GM10248 (cell line): ENCODE measurements at regions of chr17 and their contacts with region 1.

Region 1: DNA sequence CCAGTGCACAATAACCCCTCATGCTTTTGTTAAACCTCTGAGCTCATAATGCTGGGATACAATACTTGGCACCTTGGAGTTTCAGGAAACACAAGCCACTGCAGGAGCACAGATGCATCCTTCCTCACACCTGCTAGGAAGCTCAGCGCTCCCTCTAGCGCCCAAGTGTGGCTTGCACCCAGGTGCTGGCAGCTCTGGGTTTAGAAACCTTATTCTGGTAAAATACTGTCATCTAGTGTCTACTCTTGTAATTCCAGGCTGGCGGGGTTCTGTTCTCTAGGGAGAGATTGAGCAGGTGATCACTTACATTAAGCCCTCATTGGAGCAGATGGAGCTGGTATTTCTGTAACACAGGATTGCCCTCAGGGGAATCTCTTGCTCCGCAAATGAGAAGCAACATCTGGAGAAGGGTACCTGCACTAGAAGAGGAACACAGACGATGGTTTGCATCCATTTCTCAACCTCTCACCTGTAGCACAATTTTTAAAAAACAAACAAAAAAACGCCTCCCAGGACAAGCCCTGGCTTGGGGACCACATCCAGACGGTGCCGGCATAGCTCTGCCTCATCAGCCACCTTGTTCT is 1.5 kb downstream of the CCL1 start:
- DNase-seq: peak; percentile 84
- CTCF ChIP-seq: peak; percentile 97

Region 2: DNA sequence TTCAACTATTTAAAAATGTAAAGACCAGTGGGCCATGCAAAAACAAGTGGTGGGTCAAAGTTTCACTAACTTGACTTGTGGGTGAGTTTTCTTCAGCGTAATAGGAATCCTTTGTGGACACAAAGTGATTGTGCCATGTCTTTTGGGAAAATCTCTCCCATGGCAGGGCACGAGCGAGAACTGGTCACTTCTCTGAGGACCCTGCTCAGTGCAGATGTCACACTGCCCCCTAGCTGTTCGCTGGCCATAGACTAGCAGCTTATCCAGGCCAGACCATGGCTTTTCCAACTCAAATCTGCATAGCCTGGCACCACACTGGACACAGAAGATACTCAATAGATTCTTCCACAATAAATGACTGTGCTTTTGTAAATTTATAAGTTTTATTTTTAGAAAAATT is 412.5 kb before region 1 on chr17:
- CTCF ChIA-PET with region 1: no interaction called
- POLR2A ChIA-PET with region 1: no interaction called
- DNase-seq: no peak
- CTCF ChIP-seq: no peak

Region 3: DNA sequence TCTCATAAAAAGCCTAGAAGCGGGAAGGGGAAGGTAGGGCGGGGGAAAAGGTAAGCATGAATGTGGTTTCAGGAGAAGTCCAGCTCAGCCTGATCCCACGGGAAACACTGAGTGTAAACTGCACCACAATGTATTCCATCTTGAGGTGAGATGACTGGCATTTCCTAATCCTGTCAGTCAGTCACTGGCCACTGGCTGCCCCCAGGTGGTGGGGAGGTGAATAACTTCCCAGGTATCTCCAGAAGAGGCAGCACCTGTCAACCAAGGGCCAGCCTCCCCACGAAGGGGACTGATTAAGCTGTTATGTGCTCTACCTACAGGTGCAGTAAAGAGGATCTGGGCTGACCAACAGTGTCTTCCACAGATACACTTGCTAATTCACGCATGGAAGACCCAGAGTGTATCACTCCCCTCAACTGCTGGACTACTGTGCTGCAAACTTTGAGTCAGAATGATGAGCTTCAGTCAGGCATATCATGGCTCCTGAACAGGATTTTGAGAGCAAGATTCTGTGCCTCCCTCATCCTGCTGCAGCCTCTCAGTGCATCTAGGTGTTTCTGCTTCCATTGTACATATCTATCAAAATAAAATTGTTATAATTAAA is 215.0 kb before region 1 on chr17:
- CTCF ChIA-PET with region 1: interaction called, 10 read pairs
- POLR2A ChIA-PET with region 1: no interaction called
- DNase-seq: peak; percentile 61
- CTCF ChIP-seq: peak; percentile 66

Region 4: DNA sequence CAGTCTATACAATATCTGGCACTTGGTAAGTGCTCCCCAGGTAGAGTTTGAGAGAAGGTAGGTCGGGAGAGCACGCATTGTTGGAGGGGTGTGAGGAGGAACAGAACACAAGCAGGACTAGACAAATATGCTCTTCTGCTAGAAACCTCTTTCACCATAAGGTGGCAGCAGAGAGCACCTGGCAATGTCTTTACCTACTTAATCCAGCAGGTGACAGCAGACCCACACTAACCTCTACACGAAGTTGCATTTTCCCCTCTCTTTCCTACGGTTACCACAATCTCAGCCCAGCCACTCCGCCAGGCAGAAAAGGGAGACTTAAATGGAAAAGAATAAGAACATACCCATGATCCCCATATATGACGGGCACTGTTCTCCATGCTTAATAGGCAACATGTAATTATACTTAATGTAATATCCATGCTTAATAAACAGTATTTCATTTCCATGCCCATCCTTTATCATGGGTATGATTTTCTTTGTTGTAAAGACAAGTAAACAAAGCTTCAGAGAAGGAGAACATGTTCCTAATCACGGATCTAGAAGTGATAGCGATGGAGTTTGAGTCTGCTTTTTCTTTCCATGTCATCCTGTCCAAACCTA is 161.5 kb before region 1 on chr17:
- CTCF ChIA-PET with region 1: interaction called, 305 read pairs
- POLR2A ChIA-PET with region 1: no interaction called
- DNase-seq: peak; percentile 76
- CTCF ChIP-seq: peak; percentile 100

Region 5: DNA sequence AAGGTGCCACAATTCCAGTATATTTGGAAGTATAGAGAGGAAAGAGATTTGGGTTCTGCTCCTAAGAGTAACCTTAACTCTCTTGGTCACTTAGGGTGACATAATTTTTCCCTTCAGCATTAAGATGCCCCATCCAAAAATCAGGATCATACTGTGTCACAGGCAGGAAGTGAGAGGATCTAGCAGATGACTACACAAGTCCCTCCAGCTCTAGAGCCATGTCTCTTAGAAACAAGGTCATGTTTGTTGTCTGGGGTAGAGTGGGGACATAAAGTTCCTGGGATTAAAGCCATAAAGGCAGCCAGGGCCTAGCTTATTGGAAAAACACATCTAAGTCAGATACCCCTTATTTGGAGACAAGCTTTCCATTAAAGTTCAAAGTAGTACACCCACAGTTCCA is 39.6 kb before region 1 on chr17:
- CTCF ChIA-PET with region 1: interaction called, 24 read pairs
- POLR2A ChIA-PET with region 1: no interaction called
- DNase-seq: no peak
- CTCF ChIP-seq: no peak

Region 6: DNA sequence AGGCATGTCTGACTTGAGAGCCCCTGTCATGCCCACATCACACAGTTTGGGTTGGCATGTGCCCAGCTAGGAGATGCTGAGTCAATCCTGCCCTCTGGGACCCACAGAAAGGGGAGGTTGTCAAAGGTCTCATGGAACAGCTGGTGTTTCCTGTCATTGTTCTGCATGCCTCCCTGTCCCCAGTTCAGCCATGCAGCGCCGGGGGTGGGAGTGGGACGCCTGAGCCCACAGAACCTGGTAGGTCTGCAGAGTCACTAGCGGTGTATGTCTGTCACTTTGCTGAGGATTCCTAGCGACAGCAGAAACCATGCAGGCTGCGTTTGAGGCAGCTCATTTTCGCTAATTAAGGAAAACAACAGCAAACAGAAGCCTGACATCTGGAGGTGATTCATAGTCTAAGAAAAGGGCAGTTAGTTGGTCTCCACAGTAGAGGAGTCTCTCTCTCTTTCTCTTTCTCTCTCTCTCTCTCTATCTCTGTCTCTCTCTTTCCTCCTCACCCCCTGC is 21.1 kb after region 1 on chr17:
- CTCF ChIA-PET with region 1: interaction called, 25 read pairs
- POLR2A ChIA-PET with region 1: no interaction called
- DNase-seq: no peak
- CTCF ChIP-seq: no peak